ENCODE measurements at regions of chr14 and their contacts with region 1.

Region 1: DNA sequence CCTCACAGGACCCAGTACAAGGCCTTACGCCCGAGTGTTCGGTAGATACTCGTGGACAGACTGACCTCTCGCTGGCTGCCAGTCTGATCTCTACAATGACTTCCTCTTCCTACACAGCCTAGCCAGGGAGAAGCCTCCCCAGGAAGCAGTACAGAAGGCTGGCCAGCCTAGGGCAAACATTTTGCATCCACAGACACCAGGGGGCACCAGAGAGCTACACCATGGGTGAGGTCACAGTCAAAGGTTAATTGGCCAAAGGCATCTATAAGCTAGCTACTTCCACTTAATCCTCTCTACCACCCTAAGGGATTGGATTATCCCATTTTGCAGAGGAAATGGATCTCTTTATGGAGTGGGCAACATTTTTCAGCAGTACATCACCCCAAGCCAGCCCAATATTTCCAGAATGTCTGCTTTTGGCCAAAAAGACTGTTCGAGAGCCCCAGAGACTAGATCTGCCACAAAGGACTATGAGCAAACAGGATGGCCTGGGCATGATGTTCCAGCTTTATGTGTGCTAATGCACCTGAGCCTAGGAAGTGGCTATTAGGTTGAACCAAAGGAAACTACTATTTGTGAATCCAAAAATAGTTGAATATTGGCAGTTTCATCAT is 14.6 kb upstream of the PNMA1 start:
- DNase-seq: peak; percentile 94
- H3K4me3 ChIP-seq: no peak overlapping the region
- H3K27ac ChIP-seq: peak overlapping the region; percentile 78 to 89 (median 80)
- H3K4me1 ChIP-seq: peaks cover 26 to 78% (median 54%) of the 10 kb centered on the region in 4 donors
- H3K27me3 ChIP-seq: no peaks in the 10 kb centered on the region
- CTCF ChIP-seq: peak; percentile 91 to 99 (median 95)
- EP300 ChIP-seq: no peak
- POLR2A ChIP-seq: peak; percentile 24

Region 2: GRCh38 chr14:73097421-73097820 is 631.4 kb before region 1 on chr14:
- in situ Hi-C with region 1: no loop called
- intact Hi-C with region 1: no loop called
- DNase-seq: no peak
- H3K4me3 ChIP-seq: no peak overlapping the region
- H3K27ac ChIP-seq: no peak overlapping the region
- H3K4me1 ChIP-seq: no peaks in the 10 kb centered on the region
- H3K27me3 ChIP-seq: no peaks in the 10 kb centered on the region
- CTCF ChIP-seq: no peak
- EP300 ChIP-seq: no peak
- POLR2A ChIP-seq: no peak

Region 3: GRCh38 chr14:73753959-73754882 is 25.4 kb after region 1 on chr14:
- in situ Hi-C with region 1: no loop called
- intact Hi-C with region 1: loop called (anchors 2 kb)
- DNase-seq: peak; percentile 70
- H3K4me3 ChIP-seq: peak overlapping the region in 2 of 4 donors; percentile 2 to 27
- H3K27ac ChIP-seq: peak overlapping the region; percentile 99 to 100 (median 100)
- H3K4me1 ChIP-seq: peaks cover 91 to 99% (median 94%) of the 10 kb centered on the region in 4 donors
- H3K27me3 ChIP-seq: no peaks in the 10 kb centered on the region
- CTCF ChIP-seq: no peak
- EP300 ChIP-seq: no peak
- POLR2A ChIP-seq: no peak

Region 4: GRCh38 chr14:73825551-73826188 is 96.8 kb after region 1 on chr14:
- in situ Hi-C with region 1: loop called in 3 of 4 experiments (anchors 5 to 10 kb)
- intact Hi-C with region 1: loop called (anchors 10 kb)
- DNase-seq: peak; percentile 94
- H3K4me3 ChIP-seq: no peak overlapping the region
- H3K27ac ChIP-seq: peak overlapping the region in 3 of 4 donors; percentile 18 to 40 (median 28)
- H3K4me1 ChIP-seq: peaks cover 6 to 22% (median 13%) of the 10 kb centered on the region in 4 donors
- H3K27me3 ChIP-seq: no peaks in the 10 kb centered on the region
- CTCF ChIP-seq: peak; percentile 84 to 96 (median 88)
- EP300 ChIP-seq: no peak
- POLR2A ChIP-seq: no peak

Region 5: GRCh38 chr14:73851644-73852382 is 123.0 kb after region 1 on chr14 and contains the start of gene PTGR2:
- in situ Hi-C with region 1: no loop called
- intact Hi-C with region 1: loop called (anchors 10 kb)
- DNase-seq: peak; percentile 96
- H3K4me3 ChIP-seq: peak within 1 kb of the TSS; percentile 40 to 62 (median 46)
- H3K27ac ChIP-seq: peak within 1 kb of the TSS; percentile 91 to 95 (median 92)
- H3K4me1 ChIP-seq: peaks cover 9 to 29% (median 15%) of the 10 kb centered on the region in 4 donors
- H3K27me3 ChIP-seq: no peaks in the 10 kb centered on the region
- CTCF ChIP-seq: peak in 4 of 5 experiments; percentile 18 to 57 (median 35)
- EP300 ChIP-seq: peak; percentile 3
- POLR2A ChIP-seq: peak; percentile 90
- total RNA-seq, gene PTGR2: 1.8 to 15.8 (median 10.8) TPM

Measured in transverse colon (tissue), 4 donors.